ENCODE measurements at regions of chr11 and their contacts with region 1.

Region 1: GRCh38 chr11:1970956-1971355 is 23.8 kb downstream of the MRPL23 start:
- DNase-seq: no peak
- ATAC-seq: peak; percentile 14
- H3K4me3 ChIP-seq: no peak overlapping the region
- H3K27ac ChIP-seq: no peak overlapping the region
- H3K4me1 ChIP-seq: no peaks in the 10 kb centered on the region
- H3K27me3 ChIP-seq: no peaks in the 10 kb centered on the region
- CTCF ChIP-seq: no peak
- EP300 ChIP-seq: no peak
- POLR2A ChIP-seq: no peak
- RAD21 ChIP-seq: no peak

Region 2: GRCh38 chr11:1946812-1947484 is 24.0 kb before region 1 on chr11 and contains the start of gene MRPL23:
- CTCF ChIA-PET with region 1: no interaction called
- POLR2A ChIA-PET with region 1: interaction called, 11 read pairs
- in situ Hi-C with region 1: no loop called
- intact Hi-C with region 1: no loop called
- DNase-seq: no peak
- ATAC-seq: peak; percentile 57
- H3K4me3 ChIP-seq: no peak within 1 kb of the TSS
- H3K27ac ChIP-seq: no peak within 1 kb of the TSS
- H3K4me1 ChIP-seq: peaks cover 7% of the 10 kb centered on the region; the same call in 1 of the 2 replicates
- H3K27me3 ChIP-seq: peaks cover 0 to 4% of the 10 kb centered on the region in 2 experiments; a peak in 2 of 5 replicates
- CTCF ChIP-seq: no peak
- EP300 ChIP-seq: no peak
- POLR2A ChIP-seq: no peak
- RAD21 ChIP-seq: no peak
- total RNA-seq, gene MRPL23: 123 and 126 TPM in 2 replicates

Region 3: GRCh38 chr11:2143799-2144543 is 173.0 kb after region 1 on chr11:
- CTCF ChIA-PET with region 1: no interaction called
- POLR2A ChIA-PET with region 1: no interaction called
- in situ Hi-C with region 1: no loop called
- intact Hi-C with region 1: no loop called
- DNase-seq: no peak
- ATAC-seq: no peak
- H3K4me3 ChIP-seq: peak overlapping the region; percentile 14 to 53 (median 40); a peak in 3 of 6 replicates
- H3K27ac ChIP-seq: no peak overlapping the region
- H3K4me1 ChIP-seq: peaks cover 36% of the 10 kb centered on the region
- H3K27me3 ChIP-seq: peaks cover 8 to 65% of the 10 kb centered on the region in 2 experiments
- CTCF ChIP-seq: peak; percentile 58
- EP300 ChIP-seq: no peak
- POLR2A ChIP-seq: no peak
- RAD21 ChIP-seq: 0 out of 2 replicates have a peak, but pooled peaks have one; percentile 31

Measured in HepG2 (cell line).